ENCODE measurements at regions of chr19 and their contacts with region 1.

Region 1: DNA sequence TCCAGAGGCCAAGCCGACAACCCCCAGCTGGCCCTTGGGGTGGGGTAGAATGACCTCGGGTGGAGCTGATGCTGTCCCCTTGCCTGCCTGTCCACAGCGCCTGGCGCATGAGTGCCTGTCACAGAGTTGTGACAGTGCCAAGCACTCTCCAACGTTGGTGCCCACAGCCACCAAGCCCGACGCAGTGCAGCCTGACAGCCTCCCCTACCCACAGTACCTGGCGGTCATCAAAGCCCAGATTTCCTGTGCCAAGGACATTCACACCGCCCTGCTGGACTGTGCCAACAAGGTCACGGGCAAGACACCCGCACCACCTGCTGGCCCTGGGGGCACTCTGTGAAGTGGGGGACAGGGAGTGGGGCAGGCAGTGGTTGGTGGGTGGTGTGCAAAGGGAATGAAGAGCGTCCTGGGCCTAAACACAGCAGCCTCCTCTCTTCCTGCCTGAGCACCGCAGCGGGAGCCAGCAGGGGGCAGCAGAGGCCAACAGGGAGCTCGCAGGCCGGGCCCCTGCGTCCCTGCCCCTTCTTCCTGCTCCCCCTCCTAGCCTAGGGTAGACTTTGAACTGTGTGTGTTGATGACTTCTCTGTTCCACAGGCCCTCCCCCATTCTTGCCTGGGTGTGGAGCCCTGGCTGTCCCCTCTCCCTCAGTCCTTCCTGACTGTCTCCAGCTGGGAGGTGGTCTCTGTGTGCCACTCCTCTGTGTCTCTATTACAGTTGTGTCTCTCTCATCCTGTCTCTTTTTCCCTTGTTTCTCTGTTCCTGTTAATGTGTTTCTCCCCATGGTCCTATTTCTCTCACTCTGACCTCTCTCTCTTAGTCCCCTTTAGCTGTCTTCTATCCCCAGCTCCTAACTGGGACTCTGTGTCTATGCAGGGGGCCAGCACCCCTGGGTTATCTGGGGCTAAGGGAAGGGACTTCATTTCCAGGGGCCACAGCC is 6.5 kb downstream of the MED29 start:
- DNase-seq: no peak
- H3K4me3 ChIP-seq: no peak overlapping the region
- H3K27me3 ChIP-seq: no peaks in the 10 kb centered on the region
- CTCF ChIP-seq: peak; percentile 98

Region 2: DNA sequence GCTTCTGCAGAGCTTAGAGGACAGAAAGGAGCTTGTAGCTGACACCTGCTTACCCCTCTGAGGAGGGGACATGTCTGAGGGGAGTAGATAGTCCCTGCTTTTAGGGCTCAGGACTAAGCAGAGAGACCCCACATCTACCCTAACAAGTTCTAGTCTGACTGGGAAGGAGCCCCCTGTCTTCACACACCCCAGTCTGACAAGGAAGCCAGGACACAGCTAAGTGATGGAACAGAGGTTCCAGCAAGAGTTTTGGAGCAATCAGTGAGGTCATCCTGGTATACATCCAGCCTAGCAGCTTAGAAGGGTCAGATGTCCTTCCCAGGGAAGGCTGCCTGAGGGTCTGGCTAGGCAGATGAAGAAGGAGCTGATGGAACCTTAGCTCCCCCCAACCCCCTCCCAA is 21.7 kb before region 1 on chr19:
- CTCF ChIA-PET with region 1: interaction called, 10 read pairs
- POLR2A ChIA-PET with region 1: no interaction called
- DNase-seq: no peak
- H3K4me3 ChIP-seq: no peak overlapping the region
- H3K27me3 ChIP-seq: no peaks in the 10 kb centered on the region
- CTCF ChIP-seq: no peak

Region 3: GRCh38 chr19:39428283-39429112 is 30.9 kb after region 1 on chr19:
- CTCF ChIA-PET with region 1: interaction called, 22 read pairs
- POLR2A ChIA-PET with region 1: interaction called, 7 read pairs
- DNase-seq: peak; percentile 63
- H3K4me3 ChIP-seq: no peak overlapping the region
- H3K27me3 ChIP-seq: no peaks in the 10 kb centered on the region
- CTCF ChIP-seq: no peak

Region 4: DNA sequence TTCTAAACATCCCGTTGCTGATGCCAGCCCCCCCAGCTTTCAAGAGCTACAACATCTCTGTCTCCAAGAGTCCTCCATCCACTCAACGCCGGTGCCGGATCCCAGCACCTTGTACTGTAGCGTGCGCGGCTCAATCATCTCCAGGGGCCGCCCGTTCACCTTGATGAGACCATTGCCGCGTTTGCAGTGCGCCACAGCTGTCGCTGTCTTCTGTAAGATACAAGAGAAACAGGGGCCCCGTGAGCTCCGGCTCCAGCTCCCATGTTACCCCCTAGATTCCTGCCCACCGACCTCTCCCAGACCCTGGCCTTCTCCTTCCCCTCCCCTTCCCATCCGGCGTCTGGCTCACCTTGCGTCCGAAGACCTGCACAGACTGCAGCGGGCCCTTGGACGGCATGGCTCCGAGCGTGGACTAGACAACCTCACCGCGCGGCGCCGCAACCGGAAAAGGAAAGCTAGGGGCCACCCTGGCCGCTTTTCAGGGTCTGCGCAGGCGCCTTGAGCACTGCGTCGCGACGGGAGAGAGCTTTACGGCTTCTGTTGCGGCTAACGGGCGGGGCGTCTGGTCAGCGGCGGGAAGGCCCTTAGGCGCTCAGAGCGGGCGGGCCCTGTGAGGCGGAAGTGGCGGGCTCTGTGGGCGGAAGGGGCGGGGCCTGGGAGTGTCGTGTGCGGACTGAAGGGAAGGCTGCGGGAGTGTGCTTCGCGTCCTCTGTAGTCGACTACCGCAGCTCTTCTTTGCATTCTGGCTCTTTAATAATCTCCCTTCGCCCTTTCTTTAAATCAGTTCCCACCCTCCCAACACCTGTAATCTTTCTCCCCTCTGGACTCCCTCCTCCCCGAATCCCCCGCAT is 38.1 kb after region 1 on chr19 and contains the start of gene RPS16:
- CTCF ChIA-PET with region 1: interaction called, 4 read pairs
- POLR2A ChIA-PET with region 1: interaction called, 11 read pairs
- DNase-seq: peak; percentile 66
- H3K4me3 ChIP-seq: peak within 1 kb of the TSS; percentile 98
- H3K27me3 ChIP-seq: no peaks in the 10 kb centered on the region
- CTCF ChIP-seq: no peak
- polyA plus RNA-seq, gene RPS16: 2,401 and 2,896 TPM in 2 replicates

Measured in BJ (cell line).